ENCODE measurements at regions of chr10 and their contacts with region 1.

Region 1: GRCh38 chr10:8815969-8816368 is 761.5 kb downstream of the GATA3 start:
- DNase-seq: peak; percentile 63
- H3K4me3 ChIP-seq: no peak overlapping the region
- H3K27ac ChIP-seq: no peak overlapping the region
- H3K4me1 ChIP-seq: peaks cover 29% of the 10 kb centered on the region
- H3K27me3 ChIP-seq: no peaks in the 10 kb centered on the region
- CTCF ChIP-seq: no peak

Region 2: DNA sequence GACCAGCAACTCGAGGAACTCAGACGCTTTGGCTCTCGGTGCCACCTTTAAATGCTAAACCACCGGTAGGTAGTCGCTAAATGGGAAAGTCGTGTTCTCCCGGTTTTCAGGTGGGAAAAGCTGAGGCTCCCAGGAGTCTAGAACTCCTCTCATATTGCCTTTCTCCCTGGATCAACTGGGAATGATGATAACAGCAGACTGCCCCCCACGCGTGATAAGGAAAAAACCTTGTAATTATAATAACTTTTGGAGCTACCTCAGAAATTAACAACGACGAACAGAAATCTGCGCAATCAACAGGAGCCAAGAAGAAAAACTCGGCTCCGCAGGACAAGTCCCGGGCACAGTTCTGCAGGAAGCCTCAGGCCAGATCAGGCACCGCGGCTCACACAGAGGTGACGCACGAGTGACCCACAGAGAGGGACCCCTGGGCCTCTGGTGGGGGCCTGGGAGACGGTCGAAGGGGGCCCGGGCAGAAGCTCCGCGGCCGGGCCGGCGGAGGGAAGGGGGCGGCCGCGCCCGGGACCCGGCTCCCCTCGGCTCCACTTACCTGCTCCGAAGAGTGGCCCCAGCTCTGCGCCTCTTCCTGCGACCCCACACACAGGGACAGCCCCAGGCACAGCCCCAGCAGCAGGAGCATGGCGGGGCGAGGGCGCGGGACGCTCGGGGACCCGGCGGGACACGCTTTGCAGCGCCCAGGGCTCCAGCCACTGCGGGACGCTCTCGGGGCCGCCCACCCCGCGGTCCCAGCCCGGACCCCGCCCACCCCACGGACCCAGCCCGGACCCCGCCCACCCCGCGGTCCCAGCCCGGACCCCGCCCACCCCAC is 1149.5 kb before region 1 on chr10 and contains the start of gene ITIH5:
- CTCF ChIA-PET with region 1: no interaction called
- dilution Hi-C with region 1: no loop called
- in situ Hi-C with region 1: no loop called
- intact Hi-C with region 1: no loop called
- DNase-seq: no peak
- H3K4me3 ChIP-seq: peak within 1 kb of the TSS; percentile 36 to 48 (median 39)
- H3K27ac ChIP-seq: no peak within 1 kb of the TSS
- H3K4me1 ChIP-seq: peaks cover 3% of the 10 kb centered on the region
- H3K27me3 ChIP-seq: peaks cover 20% of the 10 kb centered on the region
- CTCF ChIP-seq: no peak
- total RNA-seq, gene ITIH5: 2.2 TPM in 1 of 2 donors, not detected in the other

Region 3: DNA sequence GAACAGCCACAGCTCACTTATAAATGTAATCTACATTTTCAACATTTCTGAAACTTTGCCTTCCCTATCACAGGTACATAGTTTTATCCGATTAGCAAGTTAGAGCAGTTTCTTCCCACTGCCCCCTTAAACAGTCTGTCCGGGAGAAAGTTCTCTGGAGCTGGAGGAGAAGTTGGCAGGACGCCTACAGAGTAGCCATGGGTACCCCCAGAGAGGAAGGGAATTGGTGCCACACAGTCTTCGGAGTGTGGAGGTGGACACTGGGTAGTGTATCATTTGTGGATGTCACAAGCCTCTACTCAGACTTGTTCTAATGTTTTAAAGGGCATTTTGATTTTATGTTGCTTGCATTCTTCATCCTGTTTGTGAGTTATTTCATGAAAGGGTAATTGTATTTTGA is 958.7 kb before region 1 on chr10:
- CTCF ChIA-PET with region 1: no interaction called
- dilution Hi-C with region 1: no loop called
- in situ Hi-C with region 1: no loop called
- intact Hi-C with region 1: no loop called
- DNase-seq: no peak
- H3K4me3 ChIP-seq: no peak overlapping the region
- H3K27ac ChIP-seq: no peak overlapping the region
- H3K4me1 ChIP-seq: no peaks in the 10 kb centered on the region
- H3K27me3 ChIP-seq: no peaks in the 10 kb centered on the region
- CTCF ChIP-seq: no peak

Region 4: DNA sequence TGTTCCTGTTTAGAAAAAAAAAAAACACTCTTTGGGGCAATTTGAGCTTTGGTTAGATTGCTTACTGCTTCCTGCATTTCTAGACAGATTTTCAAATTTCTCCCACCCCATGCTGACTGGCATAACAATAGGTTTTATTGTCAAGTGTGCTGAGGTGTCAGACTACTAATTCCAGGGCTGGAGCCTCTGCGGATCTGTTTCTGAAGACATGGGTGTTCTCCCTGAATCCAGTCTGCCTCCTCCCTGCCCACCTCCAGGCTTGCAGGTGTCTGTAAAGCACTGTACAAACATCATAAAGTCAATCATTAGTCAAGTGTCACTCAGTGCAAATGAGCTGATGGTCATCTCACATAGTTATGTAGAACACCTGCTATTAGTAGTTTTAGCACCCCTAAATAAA is 469.1 kb before region 1 on chr10:
- CTCF ChIA-PET with region 1: no interaction called
- dilution Hi-C with region 1: no loop called
- in situ Hi-C with region 1: no loop called
- intact Hi-C with region 1: no loop called
- DNase-seq: no peak
- H3K4me3 ChIP-seq: no peak overlapping the region
- H3K27ac ChIP-seq: no peak overlapping the region
- H3K4me1 ChIP-seq: no peaks in the 10 kb centered on the region
- H3K27me3 ChIP-seq: no peaks in the 10 kb centered on the region
- CTCF ChIP-seq: no peak

Region 5: GRCh38 chr10:8778713-8779112 is 37.3 kb before region 1 on chr10:
- CTCF ChIA-PET with region 1: no interaction called
- dilution Hi-C with region 1: no loop called
- in situ Hi-C with region 1: no loop called
- intact Hi-C with region 1: loop called (anchors 5 kb)
- DNase-seq: peak; percentile 23
- H3K4me3 ChIP-seq: no peak overlapping the region
- H3K27ac ChIP-seq: no peak overlapping the region
- H3K4me1 ChIP-seq: peaks cover 6% of the 10 kb centered on the region
- H3K27me3 ChIP-seq: no peaks in the 10 kb centered on the region
- CTCF ChIP-seq: no peak

Region 6: GRCh38 chr10:8898745-8899325 is 82.9 kb after region 1 on chr10:
- CTCF ChIA-PET with region 1: no interaction called
- dilution Hi-C with region 1: no loop called
- in situ Hi-C with region 1: no loop called
- intact Hi-C with region 1: no loop called
- DNase-seq: no peak
- H3K4me3 ChIP-seq: no peak overlapping the region
- H3K27ac ChIP-seq: no peak overlapping the region
- H3K4me1 ChIP-seq: no peaks in the 10 kb centered on the region
- H3K27me3 ChIP-seq: no peaks in the 10 kb centered on the region
- CTCF ChIP-seq: no peak